Calu3 (cell line): ENCODE measurements at regions of chr5 and their contacts with region 1.

Region 1: GRCh38 chr5:80343067-80343466 is 23.3 kb downstream of the SPZ1 start:
- DNase-seq: no peak
- H3K4me3 Mint-ChIP-seq: no peak overlapping the region
- H3K27ac Mint-ChIP-seq: no peak overlapping the region
- H3K4me1 Mint-ChIP-seq: no peaks in the 10 kb centered on the region
- H3K27me3 Mint-ChIP-seq: peaks cover 15% of the 10 kb centered on the region
- CTCF ChIP-seq: no peak

Region 2: DNA sequence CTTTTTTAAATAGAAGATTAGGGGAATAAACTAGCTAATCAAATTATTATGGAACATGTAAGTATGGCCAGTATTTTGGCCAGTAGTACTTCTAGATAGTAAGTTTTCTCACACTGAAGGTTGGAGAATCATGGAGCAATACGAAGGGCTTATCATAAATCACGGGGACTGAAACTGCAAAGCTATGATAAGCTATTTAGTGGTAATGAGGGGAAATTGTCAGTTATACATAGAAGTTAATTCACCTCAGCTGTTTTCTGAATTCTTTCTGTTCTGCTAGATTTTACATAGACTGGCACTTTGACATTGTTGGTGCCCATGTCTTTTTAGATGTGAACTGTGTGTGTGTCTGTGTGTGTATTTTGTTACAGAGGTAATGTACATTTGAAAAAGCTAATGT is 110.3 kb after region 1 on chr5:
- CTCF ChIA-PET with region 1: no interaction called
- intact Hi-C with region 1: loop called (anchors 5 kb)
- DNase-seq: no peak
- H3K4me3 Mint-ChIP-seq: no peak overlapping the region
- H3K27ac Mint-ChIP-seq: no peak overlapping the region
- H3K4me1 Mint-ChIP-seq: no peaks in the 10 kb centered on the region
- H3K27me3 Mint-ChIP-seq: no peaks in the 10 kb centered on the region
- CTCF ChIP-seq: no peak

Region 3: GRCh38 chr5:80672140-80672736 is 329.2 kb after region 1 on chr5:
- CTCF ChIA-PET with region 1: interaction called, 6 read pairs
- intact Hi-C with region 1: loop called (anchors 5 kb)
- DNase-seq: peak; percentile 80
- H3K4me3 Mint-ChIP-seq: no peak overlapping the region
- H3K27ac Mint-ChIP-seq: no peak overlapping the region
- H3K4me1 Mint-ChIP-seq: no peaks in the 10 kb centered on the region
- H3K27me3 Mint-ChIP-seq: no peaks in the 10 kb centered on the region
- CTCF ChIP-seq: peak; percentile 80